Left cardiac atrium (tissue), 4 donors: ENCODE measurements at regions of chr9 and their contacts with region 1.

Region 1: GRCh38 chr9:68669218-68669617 is 35.8 kb upstream of the PIP5K1B start:
- DNase-seq: no peak
- ATAC-seq: no peak

Region 2: DNA sequence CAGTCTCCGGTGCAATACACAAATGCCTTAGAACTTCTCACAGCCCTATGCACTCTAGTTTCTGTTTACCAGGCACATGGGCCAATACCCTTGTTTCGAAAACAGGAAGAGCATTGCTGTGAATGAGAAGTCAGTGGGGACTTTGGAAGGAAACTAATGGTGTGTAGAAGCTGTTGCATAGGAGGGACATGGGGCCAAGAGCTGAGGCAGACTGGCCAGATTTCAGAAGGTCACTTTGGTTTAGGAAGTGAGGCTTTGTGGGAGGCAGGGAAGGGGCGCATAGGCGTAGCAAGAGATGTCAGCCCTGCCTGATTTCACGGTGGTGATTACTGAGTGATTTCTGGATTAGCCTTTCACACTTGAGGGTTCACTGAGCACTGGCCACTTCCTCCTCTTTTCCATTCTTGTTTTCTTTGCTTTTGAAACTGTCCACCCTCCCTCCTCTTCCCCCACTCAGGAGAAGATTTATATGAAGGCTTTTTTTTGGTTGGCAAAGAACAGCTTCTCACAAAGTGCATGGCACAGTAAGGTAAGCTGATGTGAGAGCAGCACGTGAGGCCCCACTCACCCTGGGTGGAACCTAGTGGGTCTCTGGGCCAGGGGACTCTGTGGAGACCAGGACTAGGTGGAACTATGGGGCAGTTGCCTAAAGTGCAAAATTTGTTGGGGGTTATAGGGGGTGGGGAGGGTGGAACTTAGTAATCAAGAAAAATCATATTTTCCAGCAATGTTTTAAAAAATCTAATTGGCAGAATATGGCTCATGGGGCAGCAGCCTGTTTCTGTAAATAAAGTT is 122.4 kb before region 1 on chr9:
- intact Hi-C with region 1: no loop called
- DNase-seq: peak; percentile 25
- ATAC-seq: peak; percentile 73 to 85

Region 3: DNA sequence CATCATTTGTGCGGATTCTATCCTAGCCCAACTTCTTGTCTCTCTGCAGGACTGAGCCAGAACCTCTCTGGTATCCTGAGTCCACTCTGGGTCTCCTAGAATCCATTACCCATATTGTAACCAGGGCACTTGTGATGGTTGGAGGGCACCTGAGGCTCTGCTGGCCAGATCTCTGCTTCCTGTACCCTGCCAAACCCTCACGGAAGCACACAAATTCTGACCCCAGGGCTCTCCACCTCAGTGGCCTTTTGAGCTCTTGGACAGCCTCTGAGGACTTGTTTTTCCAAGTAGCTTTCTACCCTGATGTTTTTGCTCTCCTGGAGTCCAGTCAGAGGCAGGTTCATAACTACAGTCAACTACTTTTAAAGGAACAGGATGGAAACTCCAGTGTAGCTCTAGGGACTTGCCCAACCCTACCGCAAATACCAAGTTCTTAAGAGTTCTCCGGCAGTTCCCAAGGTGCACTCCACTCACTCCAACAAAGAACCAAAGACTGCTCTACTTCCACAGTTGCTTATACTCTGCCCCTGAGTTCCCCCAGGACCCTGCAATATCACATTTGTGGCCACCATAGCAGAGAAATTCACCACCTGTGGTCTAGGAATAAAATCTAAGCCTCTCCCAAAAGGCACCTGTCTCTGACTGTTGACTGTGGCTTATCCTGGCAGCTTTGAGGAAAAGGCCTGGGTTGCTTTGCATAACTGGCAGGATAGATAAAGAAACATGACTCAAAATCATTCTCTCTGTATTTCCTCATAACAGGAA is 45.4 kb after region 1 on chr9:
- intact Hi-C with region 1: no loop called
- DNase-seq: no peak
- ATAC-seq: no peak

Region 4: GRCh38 chr9:68728731-68729130 is 59.5 kb after region 1 on chr9:
- intact Hi-C with region 1: loop called in 1 of 2 experiments (anchors 10 kb)
- DNase-seq: no peak
- ATAC-seq: no peak